HEK293 (cell line): ENCODE measurements at regions of chr5 and their contacts with region 1.

Region 1: GRCh38 chr5:59174248-59174844 is 591.5 kb downstream of the RAB3C start:
- H3K4me3 ChIP-seq: no peak overlapping the region
- H3K27ac ChIP-seq: no peak overlapping the region
- H3K4me1 ChIP-seq: no peaks in the 10 kb centered on the region
- CTCF ChIP-seq: peak; percentile 54

Region 2: DNA sequence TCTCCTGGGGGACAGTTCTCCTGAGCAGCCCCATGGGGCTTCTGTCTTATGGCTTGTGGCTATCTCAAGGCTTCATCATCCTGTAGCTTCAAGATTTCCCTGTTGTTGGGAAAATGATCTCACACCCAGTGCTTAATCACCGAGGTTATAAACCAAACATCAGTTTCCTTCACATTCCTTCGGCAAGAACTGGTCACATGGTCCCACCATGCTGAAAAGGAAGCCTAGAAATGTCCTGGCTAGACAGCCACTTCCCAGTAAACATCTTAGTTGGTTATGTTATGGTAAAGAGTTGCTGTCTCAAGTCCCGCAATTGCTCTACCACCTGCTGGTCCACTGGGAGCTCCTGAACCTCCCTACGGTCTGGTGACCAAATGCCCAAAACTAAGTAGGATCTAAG is 525.5 kb before region 1 on chr5:
- CTCF ChIA-PET with region 1: no interaction called
- POLR2A ChIA-PET with region 1: no interaction called
- H3K4me3 ChIP-seq: no peak overlapping the region
- H3K27ac ChIP-seq: no peak overlapping the region
- H3K4me1 ChIP-seq: no peaks in the 10 kb centered on the region
- CTCF ChIP-seq: no peak

Region 3: DNA sequence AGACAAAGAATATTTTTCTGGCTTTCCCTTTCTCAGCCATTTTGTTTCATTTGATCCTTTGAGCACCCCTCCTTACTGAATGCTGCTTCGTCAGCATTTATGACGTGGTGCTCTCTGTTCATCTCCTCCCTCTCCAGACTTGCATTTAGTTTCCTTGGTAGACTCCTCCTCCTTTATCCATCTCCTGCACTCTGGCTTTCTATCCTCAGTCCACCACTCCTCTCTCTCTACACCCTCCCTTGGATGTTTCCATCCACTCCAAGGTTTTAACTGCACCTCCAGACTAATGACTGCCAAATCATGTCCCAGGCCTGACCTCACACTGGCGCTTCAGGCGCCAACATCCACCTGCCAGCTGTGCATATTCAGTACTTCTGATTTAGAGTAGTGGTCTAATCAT is 346.1 kb before region 1 on chr5:
- CTCF ChIA-PET with region 1: no interaction called
- POLR2A ChIA-PET with region 1: no interaction called
- H3K4me3 ChIP-seq: no peak overlapping the region
- H3K27ac ChIP-seq: no peak overlapping the region
- H3K4me1 ChIP-seq: no peaks in the 10 kb centered on the region
- CTCF ChIP-seq: no peak

Region 4: DNA sequence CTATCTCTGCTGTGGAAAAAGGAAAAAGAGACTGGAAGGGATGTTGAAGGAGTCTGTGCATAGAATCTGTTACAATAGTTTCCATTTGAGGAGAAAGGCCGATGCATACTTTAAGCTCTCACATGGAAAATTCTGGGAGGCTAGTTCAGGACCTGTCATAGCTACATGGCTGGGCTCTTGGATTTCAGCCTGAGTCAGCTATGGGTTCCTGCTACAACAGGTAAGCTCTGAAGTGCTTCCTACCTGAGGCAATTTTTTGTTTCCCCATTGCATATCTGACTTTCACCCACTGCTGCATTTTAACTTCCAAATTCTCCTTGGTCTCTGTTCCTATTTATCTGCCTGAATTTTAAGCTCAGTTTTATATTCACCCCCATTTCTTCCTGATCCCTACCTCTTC is 280.8 kb before region 1 on chr5:
- CTCF ChIA-PET with region 1: interaction called, 27 read pairs
- POLR2A ChIA-PET with region 1: no interaction called
- H3K4me3 ChIP-seq: no peak overlapping the region
- H3K27ac ChIP-seq: no peak overlapping the region
- H3K4me1 ChIP-seq: no peaks in the 10 kb centered on the region; the same call in 1 of the 2 replicates
- CTCF ChIP-seq: no peak

Region 5: DNA sequence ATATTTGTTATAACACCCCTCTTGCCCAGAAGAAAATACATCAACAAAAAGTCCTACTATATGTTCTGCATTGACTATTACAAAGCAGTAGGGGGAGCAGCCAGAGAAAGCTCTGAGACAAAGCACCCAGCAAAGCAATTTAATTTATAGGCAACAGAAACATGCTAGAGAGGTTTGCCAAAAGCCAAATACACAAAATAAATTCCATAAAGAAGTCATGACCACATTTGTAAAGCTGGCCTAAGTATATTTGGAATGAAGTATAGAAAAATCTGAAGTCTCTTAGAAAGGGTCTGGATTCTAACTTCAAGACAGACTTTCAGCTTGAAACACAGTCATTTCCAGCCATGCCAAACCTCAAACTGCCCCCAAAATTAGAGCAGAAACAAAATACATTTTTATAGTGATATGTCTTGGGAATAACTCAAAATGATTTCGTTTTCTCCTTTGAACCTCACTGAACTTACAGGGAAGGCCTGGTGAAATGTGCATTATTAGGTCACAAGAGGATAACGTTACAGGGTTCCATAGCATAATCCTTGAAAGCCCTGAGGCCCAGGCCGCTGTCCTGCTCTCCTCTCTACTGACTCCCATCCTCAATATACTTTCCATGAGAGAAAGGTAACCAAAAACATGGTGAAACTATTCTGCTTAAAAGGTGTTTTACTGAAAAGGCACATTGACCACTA is 139.7 kb before region 1 on chr5:
- CTCF ChIA-PET with region 1: interaction called, 29 read pairs
- POLR2A ChIA-PET with region 1: no interaction called
- H3K4me3 ChIP-seq: no peak overlapping the region
- H3K27ac ChIP-seq: no peak overlapping the region
- H3K4me1 ChIP-seq: peaks cover 18% of the 10 kb centered on the region
- CTCF ChIP-seq: no peak